Activated CD4-positive, alpha-beta T cell treated with anti-CD3 and anti-CD28 coated beads, Interleukin-2, amount 10 ng/mL, durations not matched to agents 24 days and 14 days (primary cell): ENCODE measurements at regions of chr9 and their contacts with region 1.

Region 1: DNA sequence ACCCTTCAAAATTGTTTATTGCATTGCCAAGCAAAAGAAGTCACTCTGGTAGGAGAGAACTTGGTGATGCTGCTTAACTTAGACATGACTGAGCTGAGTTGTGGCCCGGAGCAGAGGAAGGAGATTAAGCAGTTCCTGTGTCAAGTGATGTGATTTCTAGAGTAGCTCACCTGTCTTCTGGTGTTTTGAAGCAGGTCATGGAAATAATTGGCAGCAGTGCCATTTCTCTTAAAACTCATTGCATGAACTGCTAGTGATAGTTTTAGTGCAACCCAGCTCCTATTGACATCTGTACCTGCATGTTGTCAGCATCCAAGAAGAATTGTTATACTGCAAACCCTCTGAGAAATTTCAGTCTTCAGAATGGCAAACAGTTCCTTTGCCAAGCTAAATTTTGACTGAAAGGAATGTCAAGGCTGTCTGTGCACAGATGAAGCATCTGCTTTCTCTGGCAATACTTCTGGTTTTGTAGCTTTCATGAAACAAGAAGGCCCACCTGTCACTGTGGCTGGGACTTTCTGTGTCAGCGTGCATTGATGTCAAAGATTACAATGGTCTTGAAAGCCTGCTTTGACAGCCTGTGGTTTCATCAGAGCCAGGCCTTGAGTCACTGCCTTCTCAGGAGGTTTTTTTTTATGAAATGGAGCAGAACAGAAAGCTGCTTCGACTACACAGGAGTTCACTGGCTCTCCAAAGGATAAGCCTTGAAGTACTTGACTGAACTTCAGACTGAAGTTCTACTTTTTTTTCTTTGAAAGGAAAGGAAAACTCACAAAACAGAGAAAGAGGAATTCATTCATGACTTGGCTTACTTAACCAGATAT is 90.6 kb downstream of the RALGPS1 start:
- DNase-seq: peak; percentile 92
- H3K4me3 Mint-ChIP-seq: peak overlapping the region; percentile 55
- H3K27ac Mint-ChIP-seq: peak overlapping the region; percentile 58
- H3K4me1 Mint-ChIP-seq: peaks cover 24% of the 10 kb centered on the region
- H3K27me3 Mint-ChIP-seq: peaks cover 26% of the 10 kb centered on the region

Region 2: DNA sequence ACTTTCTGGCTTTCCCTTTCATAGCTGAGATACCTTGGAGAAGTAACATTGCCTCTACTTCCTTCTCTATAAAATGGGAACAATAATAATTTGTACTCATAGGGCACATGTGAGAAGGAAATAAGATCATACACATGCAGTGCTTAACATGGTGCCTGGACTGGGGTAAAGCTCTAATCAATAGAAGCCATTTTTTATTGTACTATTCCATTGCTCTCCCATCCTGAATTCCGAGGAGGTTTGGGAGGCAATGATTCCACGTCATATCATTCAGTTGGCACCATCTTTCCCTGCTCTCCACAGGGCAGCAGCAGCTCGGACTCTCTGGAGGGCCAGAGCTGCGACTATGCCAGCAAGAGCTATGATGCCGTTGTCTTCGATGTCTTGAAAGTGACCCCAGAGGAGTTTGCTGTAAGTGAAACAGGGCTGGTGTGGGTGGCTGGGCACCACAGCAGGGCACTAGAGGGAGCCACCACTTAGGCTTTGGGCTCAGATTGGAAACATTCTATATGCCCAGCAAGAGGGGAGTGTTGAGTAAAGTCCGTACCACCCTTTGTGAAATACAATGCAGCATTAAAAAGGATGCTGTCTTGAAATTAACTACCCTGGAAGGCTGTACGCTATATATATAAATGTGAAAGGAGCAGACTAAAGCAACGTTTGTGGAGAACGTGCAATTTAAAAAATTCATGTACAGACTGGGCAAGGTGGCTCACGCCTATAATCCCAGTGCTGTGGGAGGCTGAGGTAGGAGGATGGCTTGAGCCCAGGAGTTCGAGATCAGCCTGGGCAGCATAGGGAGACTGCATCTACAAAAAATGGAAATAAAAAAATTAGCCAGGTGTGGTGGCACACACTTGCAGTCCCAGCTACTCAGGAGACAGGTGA is 39.4 kb before region 1 on chr9:
- intact Hi-C with region 1: loop called (anchors 5 kb)
- DNase-seq: peak; percentile 84
- H3K4me3 Mint-ChIP-seq: no peak overlapping the region
- H3K27ac Mint-ChIP-seq: no peak overlapping the region
- H3K4me1 Mint-ChIP-seq: peaks cover 2% of the 10 kb centered on the region
- H3K27me3 Mint-ChIP-seq: peaks cover 18% of the 10 kb centered on the region

Region 3: DNA sequence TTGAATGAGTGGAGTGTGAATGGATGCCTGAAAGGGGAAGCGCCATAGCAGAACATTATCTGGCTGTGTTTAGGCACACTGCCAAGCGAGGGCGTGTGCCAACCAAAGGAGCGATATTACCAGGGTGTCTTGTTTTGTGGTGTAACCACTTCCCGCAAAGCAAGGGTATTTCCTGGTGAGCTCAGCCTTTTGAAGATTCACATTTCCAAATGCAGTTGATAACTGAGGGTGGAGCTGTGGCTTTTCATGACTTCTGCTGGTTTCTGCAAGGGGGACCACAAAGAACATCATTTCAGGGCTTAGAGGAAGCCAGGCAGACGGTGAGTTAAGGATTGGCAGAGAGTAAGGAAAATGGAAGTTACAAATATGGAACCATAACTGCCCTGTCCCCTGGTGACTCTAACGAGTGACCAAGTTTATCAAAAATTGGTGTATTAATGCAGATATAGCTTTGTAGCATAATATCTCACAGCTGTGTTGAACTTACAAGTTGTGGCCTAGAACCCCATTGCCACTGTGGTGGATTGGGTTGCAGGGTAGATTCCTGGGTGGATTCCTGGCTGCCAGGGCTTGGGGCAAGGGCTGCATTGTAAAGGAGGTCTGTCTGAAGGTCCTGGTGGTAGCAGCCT is 19.2 kb before region 1 on chr9:
- intact Hi-C with region 1: loop called (anchors 1 kb)
- DNase-seq: peak; percentile 95
- H3K4me3 Mint-ChIP-seq: peak overlapping the region; percentile 54
- H3K27ac Mint-ChIP-seq: peak overlapping the region; percentile 83
- H3K4me1 Mint-ChIP-seq: peaks cover 44% of the 10 kb centered on the region
- H3K27me3 Mint-ChIP-seq: peaks cover 50% of the 10 kb centered on the region

Region 4: DNA sequence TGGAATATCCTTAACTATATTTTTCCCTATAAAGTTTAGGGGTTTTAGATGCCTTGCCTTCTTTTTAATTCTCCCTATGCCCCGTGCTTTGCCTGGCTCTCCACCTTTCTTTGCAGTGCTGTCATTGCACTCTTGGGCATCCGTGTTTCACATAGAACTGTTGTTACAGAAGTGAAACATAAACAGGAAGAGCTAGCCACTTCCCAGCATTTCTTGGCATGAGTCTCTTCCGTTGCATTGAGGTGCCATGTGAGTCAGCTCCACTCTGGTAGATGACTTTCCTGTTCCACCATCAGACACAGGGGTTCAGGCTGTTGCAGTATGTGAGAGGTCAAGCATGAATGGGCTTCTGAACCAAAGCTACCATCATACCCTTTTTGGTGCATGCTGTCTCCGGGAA is 43.9 kb after region 1 on chr9:
- intact Hi-C with region 1: loop called (anchors 1 kb)
- DNase-seq: peak; percentile 83
- H3K4me3 Mint-ChIP-seq: peak overlapping the region; percentile 68
- H3K27ac Mint-ChIP-seq: peak overlapping the region; percentile 25
- H3K4me1 Mint-ChIP-seq: peaks cover 29% of the 10 kb centered on the region
- H3K27me3 Mint-ChIP-seq: peaks cover 6% of the 10 kb centered on the region

Region 5: GRCh38 chr9:127244609-127245601 is 239.7 kb after region 1 on chr9:
- intact Hi-C with region 1: no loop called
- DNase-seq: peak; percentile 99
- H3K4me3 Mint-ChIP-seq: peak overlapping the region; percentile 87
- H3K27ac Mint-ChIP-seq: peak overlapping the region; percentile 58
- H3K4me1 Mint-ChIP-seq: peaks cover 8% of the 10 kb centered on the region
- H3K27me3 Mint-ChIP-seq: peaks cover 21% of the 10 kb centered on the region

Region 6: DNA sequence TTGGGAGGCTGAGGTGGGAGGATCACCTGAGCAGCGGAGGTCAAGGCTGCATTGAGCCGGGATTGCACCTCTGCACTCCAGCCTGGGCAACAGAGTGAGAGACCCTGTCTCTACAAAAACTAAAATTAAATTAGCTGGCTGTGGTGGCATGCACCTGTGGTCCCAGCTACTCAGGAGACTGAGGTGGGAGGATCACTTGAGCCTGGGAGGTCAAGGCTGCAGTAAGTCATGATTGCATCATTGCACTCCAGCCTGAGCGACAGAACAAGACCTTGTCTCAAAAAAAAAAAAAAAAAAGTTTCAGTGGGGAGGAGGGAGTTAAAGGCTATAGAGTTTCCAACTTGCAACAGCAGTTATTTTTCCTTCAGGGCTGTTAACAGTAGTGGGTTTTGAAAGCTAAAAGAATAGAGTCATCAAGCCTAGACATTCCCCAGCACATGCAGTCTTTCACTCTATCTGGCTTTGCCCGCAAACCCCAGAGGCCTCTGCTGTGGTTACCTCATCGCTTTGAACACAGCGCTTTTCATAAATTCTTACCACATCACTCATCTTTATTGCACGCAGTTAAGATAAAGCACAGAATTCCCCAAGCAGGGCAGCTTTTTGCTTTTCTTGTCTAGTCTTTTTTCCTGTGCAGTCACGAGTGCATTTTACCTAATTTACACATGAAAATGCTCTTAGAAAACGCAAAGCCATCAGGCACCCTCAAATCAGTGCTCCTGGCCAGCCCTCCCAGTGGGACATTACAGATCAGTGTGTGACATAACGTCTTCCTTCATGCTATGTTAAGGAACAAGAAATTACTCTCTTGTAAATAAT is 383.1 kb after region 1 on chr9:
- intact Hi-C with region 1: loop called (anchors 2 kb)
- DNase-seq: peak; percentile 96
- H3K4me3 Mint-ChIP-seq: peak overlapping the region; percentile 62
- H3K27ac Mint-ChIP-seq: peak overlapping the region; percentile 78
- H3K4me1 Mint-ChIP-seq: peaks cover 27% of the 10 kb centered on the region
- H3K27me3 Mint-ChIP-seq: peaks cover 64% of the 10 kb centered on the region